Transverse colon (tissue), 4 donors: ENCODE measurements at regions of chr9 and their contacts with region 1.

Region 1: GRCh38 chr9:125143375-125144090 is at the start of gene SCAI:
- DNase-seq: peak; percentile 99
- H3K4me3 ChIP-seq: peak within 1 kb of the TSS; percentile 89 to 99 (median 93)
- H3K27ac ChIP-seq: peak within 1 kb of the TSS; percentile 83 to 90 (median 88)
- H3K4me1 ChIP-seq: peaks cover 0 to 22% (median 12%) of the 10 kb centered on the region in 4 donors
- H3K27me3 ChIP-seq: no peaks in the 10 kb centered on the region
- CTCF ChIP-seq: peak; percentile 98 to 100 (median 100)
- EP300 ChIP-seq: no peak
- POLR2A ChIP-seq: peak; percentile 34
- total RNA-seq, gene SCAI: 10.4 to 38.6 (median 13.2) TPM

Region 2: GRCh38 chr9:124771021-124771866 is 372.3 kb before region 1 on chr9 and contains the start of gene NR6A1:
- in situ Hi-C with region 1: loop called in 3 of 4 experiments (anchors 10 to 25 kb)
- intact Hi-C with region 1: no loop called
- DNase-seq: peak; percentile 98
- H3K4me3 ChIP-seq: peak within 1 kb of the TSS; percentile 83 to 100 (median 91)
- H3K27ac ChIP-seq: peak within 1 kb of the TSS; percentile 88 to 94 (median 90)
- H3K4me1 ChIP-seq: peaks cover 0 to 52% (median 30%) of the 10 kb centered on the region in 4 donors
- H3K27me3 ChIP-seq: peaks cover 54% of the 10 kb centered on the region
- CTCF ChIP-seq: peak in 3 of 5 experiments; percentile 28 to 59 (median 37)
- EP300 ChIP-seq: peak; percentile 22
- POLR2A ChIP-seq: peak; percentile 33
- total RNA-seq, gene NR6A1: 9.7 to 14.6 (median 12.5) TPM

Region 3: GRCh38 chr9:124776954-124777665 is 366.4 kb before region 1 on chr9 and contains the start of gene OLFML2A:
- in situ Hi-C with region 1: loop called in 3 of 4 experiments (anchors 10 to 25 kb)
- intact Hi-C with region 1: no loop called
- DNase-seq: peak; percentile 26
- H3K4me3 ChIP-seq: peak within 1 kb of the TSS; percentile 55 to 66 (median 60)
- H3K27ac ChIP-seq: peak within 1 kb of the TSS; percentile 43 to 85 (median 80)
- H3K4me1 ChIP-seq: peaks cover 3 to 39% (median 21%) of the 10 kb centered on the region in 4 donors
- H3K27me3 ChIP-seq: peaks cover 26% of the 10 kb centered on the region
- CTCF ChIP-seq: peak in 3 of 5 experiments; percentile 24 to 31 (median 30)
- EP300 ChIP-seq: no peak
- POLR2A ChIP-seq: no peak
- total RNA-seq, gene OLFML2A: 9.4 to 59.1 (median 16.0) TPM

Region 4: DNA sequence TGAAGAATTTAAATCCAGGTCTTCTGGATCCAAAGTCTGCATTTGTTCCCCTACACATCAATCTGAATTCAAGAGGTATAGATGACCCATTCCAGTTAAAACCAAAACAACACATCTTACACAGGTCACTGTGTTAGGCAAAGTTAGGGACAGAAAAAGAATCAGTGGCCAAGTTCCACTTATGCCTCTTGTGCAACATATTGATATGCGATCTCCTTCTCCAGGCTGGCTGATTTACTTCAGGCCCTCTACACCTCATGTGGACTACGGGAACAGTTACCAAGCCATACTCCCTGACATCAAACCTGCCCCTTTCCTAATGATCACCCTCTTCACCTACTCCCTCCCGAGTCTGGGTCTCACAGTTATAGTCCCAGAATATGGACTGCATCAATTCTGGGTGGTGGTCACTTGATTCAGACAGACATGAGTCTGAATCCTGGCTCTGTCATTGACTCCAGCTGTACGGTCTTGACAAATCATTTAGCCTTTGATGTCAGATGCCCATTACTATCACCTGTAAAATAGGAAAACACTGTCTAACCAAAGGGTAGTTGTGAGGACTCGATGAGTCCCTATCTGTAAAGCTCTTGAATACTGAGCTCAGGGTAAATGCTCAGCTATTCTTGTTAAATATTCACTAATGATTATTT is 228.7 kb before region 1 on chr9:
- in situ Hi-C with region 1: loop called in 1 of 4 experiments (anchors 10 kb)
- intact Hi-C with region 1: no loop called
- DNase-seq: no peak
- H3K4me3 ChIP-seq: no peak overlapping the region
- H3K27ac ChIP-seq: no peak overlapping the region
- H3K4me1 ChIP-seq: no peaks in the 10 kb centered on the region
- H3K27me3 ChIP-seq: no peaks in the 10 kb centered on the region
- CTCF ChIP-seq: no peak
- EP300 ChIP-seq: no peak
- POLR2A ChIP-seq: no peak

Region 5: DNA sequence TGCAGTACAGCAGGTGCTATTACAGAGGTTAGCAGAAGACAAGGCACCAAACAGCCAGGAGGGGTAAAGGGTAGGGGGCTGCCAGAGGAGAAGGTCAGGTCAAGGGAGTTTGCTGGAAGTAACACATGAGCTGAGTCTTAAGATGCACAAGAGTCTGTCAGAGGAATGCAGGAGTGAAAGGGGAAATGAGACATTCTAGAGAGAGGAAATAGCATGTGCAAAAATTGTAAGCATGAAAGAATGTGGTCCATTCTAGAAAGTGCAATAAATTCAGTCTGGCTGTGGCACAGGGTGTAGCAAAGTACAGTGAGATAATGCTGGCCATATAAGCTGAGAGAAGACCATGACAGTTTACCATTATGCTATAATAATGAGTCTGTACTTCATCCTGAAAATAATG is 209.2 kb before region 1 on chr9:
- in situ Hi-C with region 1: loop called in 3 of 4 experiments (anchors 10 to 25 kb)
- intact Hi-C with region 1: no loop called
- DNase-seq: no peak
- H3K4me3 ChIP-seq: no peak overlapping the region
- H3K27ac ChIP-seq: no peak overlapping the region
- H3K4me1 ChIP-seq: no peaks in the 10 kb centered on the region
- H3K27me3 ChIP-seq: no peaks in the 10 kb centered on the region
- CTCF ChIP-seq: no peak
- EP300 ChIP-seq: no peak
- POLR2A ChIP-seq: no peak

Region 6: DNA sequence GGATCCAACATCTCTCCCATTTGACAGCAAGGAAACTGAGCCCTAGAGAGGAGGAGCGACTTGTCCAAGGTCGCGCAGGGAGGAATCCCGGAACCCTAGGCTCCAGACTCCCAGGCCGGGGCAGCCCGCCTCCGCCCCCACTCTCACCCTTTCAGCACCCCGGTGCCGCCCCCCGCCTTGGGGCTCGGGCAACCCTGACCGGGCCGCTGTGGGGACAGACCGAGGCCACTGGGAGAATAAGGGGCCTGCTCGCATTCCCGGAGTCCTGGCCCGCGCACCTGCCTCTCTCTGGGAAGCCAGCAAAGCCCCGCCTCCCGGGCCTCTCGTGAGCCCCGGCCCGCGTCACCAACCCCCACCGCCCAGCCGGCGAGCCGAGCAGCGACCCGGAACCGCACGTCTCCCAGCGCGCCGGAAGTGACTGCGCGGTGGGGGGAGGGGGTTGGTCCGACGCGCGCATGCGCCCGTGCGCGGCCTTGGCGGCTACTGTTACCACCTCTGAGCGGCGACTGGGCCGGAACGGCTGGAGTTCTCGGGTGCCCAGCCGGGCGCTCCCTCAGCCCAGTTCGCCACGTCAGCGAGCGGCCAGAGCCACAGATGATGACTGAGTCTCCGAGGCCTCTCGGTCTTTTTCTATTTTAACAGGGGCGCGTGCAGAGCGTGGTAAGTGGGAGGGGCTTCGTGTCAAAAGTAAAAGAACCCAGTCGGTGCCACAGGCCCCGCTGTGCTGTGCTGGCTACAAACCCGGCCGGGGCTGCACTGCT is 202.7 kb before region 1 on chr9 and contains the start of gene GOLGA1:
- in situ Hi-C with region 1: loop called in 3 of 4 experiments (anchors 10 to 25 kb)
- intact Hi-C with region 1: no loop called
- DNase-seq: peak; percentile 98
- H3K4me3 ChIP-seq: peak within 1 kb of the TSS; percentile 59 to 87 (median 66)
- H3K27ac ChIP-seq: peak within 1 kb of the TSS; percentile 92 to 98 (median 95)
- H3K4me1 ChIP-seq: peaks cover 0 to 19% (median 9%) of the 10 kb centered on the region in 4 donors
- H3K27me3 ChIP-seq: no peaks in the 10 kb centered on the region
- CTCF ChIP-seq: no peak
- EP300 ChIP-seq: no peak
- POLR2A ChIP-seq: peak; percentile 95
- total RNA-seq, gene GOLGA1: 24.3 to 144 (median 30.1) TPM

Region 7: DNA sequence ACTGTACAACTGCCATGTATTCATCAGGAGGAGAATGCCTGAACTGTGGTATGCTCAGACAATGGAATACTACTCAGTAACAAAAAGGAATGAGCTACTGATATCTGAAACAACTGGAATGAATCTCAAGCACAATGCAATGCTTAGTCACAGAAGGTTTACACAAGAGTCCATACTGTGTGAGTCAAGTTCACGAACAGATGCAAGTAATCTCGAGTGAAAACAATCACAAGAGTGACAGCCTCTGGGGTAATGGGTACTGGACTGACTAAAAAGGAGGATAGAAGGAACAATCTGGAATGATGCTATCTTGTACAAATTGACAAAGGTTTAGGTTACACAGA is 183.2 kb before region 1 on chr9:
- in situ Hi-C with region 1: loop called in 1 of 4 experiments (anchors 10 kb)
- intact Hi-C with region 1: no loop called
- DNase-seq: no peak
- H3K4me3 ChIP-seq: no peak overlapping the region
- H3K27ac ChIP-seq: no peak overlapping the region
- H3K4me1 ChIP-seq: no peaks in the 10 kb centered on the region
- H3K27me3 ChIP-seq: no peaks in the 10 kb centered on the region
- CTCF ChIP-seq: no peak
- EP300 ChIP-seq: no peak
- POLR2A ChIP-seq: no peak